ENCODE measurements at regions of chr1 and their contacts with region 1.

Region 1: GRCh38 chr1:33455539-33456501 is 16.6 kb upstream of the ZSCAN20 start:
- DNase-seq: peak; percentile 74
- H3K4me3 ChIP-seq: no peak overlapping the region
- H3K27ac ChIP-seq: no peak overlapping the region
- H3K4me1 ChIP-seq: peaks cover 36% of the 10 kb centered on the region
- H3K27me3 ChIP-seq: no peaks in the 10 kb centered on the region
- CTCF ChIP-seq: peak; percentile 91 to 92

Region 2: GRCh38 chr1:33111970-33112369 is 343.9 kb before region 1 on chr1:
- CTCF ChIA-PET with region 1: no interaction called
- dilution Hi-C with region 1: no loop called
- in situ Hi-C with region 1: loop called in 1 of 2 experiments (anchors 10 kb)
- intact Hi-C with region 1: loop called (anchors 5 kb)
- DNase-seq: peak; percentile 26
- H3K4me3 ChIP-seq: no peak overlapping the region
- H3K27ac ChIP-seq: no peak overlapping the region
- H3K4me1 ChIP-seq: no peaks in the 10 kb centered on the region
- H3K27me3 ChIP-seq: no peaks in the 10 kb centered on the region
- CTCF ChIP-seq: peak; percentile 48 to 62

Region 3: DNA sequence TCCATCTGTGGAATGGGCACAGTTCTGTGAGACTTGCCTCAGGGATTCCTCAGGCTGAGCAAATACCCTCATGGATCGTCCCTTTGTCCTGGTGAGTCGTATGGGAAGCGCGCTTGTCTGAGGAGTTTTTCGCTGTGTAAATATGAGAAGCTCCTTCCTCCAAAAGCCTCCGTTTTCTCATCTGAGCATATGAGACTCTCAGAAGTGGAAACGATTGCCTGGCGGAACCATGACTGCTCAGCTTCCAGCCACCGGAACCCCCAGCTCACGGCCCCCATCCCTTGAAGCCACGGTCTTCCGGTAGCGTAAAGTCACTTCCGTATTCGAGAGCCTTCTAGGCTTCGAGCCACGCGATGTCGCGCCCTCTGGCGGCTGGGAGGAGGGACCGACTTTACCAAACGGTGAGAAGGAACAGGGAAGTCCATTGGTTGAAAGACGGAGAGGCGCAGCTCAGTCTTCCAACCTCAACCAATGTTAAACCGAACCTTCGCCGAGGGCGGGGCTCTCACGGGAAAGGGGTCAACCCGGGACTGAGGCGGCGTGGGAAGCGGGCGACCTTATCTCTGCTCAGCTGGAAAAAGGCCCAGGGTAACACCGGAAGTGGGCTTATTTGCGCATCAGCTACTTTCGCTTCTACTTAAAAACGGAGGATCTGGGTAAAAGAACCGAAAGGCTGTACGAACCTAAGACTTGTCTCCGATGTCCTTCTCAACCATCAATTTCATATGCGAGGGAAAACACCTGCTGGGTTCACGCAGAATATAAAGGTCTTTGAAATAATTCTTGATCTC is 328.6 kb before region 1 on chr1:
- CTCF ChIA-PET with region 1: interaction called, 16 read pairs
- dilution Hi-C with region 1: no loop called
- in situ Hi-C with region 1: no loop called
- intact Hi-C with region 1: no loop called
- DNase-seq: peak; percentile 99
- H3K4me3 ChIP-seq: peak overlapping the region; percentile 90 to 100 (median 96)
- H3K27ac ChIP-seq: peak overlapping the region; percentile 79
- H3K4me1 ChIP-seq: peaks cover 20% of the 10 kb centered on the region
- H3K27me3 ChIP-seq: no peaks in the 10 kb centered on the region
- CTCF ChIP-seq: peak; percentile 95 to 99

Region 4: GRCh38 chr1:33295450-33296081 is 160.3 kb before region 1 on chr1:
- CTCF ChIA-PET with region 1: interaction called, 5 read pairs
- dilution Hi-C with region 1: no loop called
- in situ Hi-C with region 1: no loop called
- intact Hi-C with region 1: loop called (anchors 1 kb)
- DNase-seq: peak; percentile 76
- H3K4me3 ChIP-seq: no peak overlapping the region
- H3K27ac ChIP-seq: no peak overlapping the region
- H3K4me1 ChIP-seq: no peaks in the 10 kb centered on the region
- H3K27me3 ChIP-seq: no peaks in the 10 kb centered on the region
- CTCF ChIP-seq: peak; percentile 94 to 97

Region 5: GRCh38 chr1:33367485-33368405 is 88.1 kb before region 1 on chr1:
- CTCF ChIA-PET with region 1: interaction called, 3 read pairs
- dilution Hi-C with region 1: no loop called
- in situ Hi-C with region 1: loop called (anchors 10 to 25 kb)
- intact Hi-C with region 1: loop called (anchors 1 kb)
- DNase-seq: peak; percentile 62
- H3K4me3 ChIP-seq: no peak overlapping the region
- H3K27ac ChIP-seq: no peak overlapping the region
- H3K4me1 ChIP-seq: peaks cover 34% of the 10 kb centered on the region
- H3K27me3 ChIP-seq: no peaks in the 10 kb centered on the region
- CTCF ChIP-seq: peak; percentile 94 to 99

Region 6: DNA sequence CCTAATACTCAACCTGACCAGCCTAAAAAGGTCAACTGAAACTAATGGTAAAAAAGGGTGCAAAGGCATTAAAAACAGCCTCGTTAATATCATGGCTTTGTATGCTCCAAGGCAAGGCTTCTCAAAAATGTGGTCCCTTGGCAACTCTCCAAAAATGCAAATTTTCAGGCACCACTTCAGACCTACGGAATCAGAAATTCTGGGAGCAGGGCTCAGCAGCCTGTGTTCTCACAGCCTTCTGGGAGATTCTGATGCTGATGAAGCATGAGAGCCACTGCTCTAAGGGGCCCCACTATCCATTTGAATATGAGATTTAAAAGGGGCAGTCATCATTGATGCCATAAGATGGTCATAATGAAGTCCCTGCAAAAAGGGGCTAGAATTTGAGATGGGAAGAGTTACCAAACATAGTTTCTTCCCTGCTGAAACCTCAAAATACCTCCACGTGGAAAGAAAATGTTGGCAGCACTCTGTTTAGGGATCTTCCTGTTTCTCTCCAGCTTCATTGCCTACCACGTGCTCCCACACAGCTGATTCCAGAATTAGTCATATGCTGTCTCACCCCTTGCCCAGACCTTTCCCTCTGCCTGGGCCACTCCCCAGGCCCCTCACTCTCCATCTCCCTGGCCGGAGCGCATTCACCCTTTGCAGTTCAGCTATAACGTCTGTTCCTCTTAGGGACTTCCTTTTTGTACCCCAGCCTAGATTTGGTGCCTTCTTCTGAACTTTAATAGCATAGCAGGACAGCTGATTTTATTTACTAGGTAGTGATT is 71.6 kb before region 1 on chr1:
- CTCF ChIA-PET with region 1: no interaction called
- dilution Hi-C with region 1: no loop called
- in situ Hi-C with region 1: loop called in 1 of 2 experiments (anchors 10 kb)
- intact Hi-C with region 1: loop called (anchors 5 kb)
- DNase-seq: peak; percentile 59
- H3K4me3 ChIP-seq: no peak overlapping the region
- H3K27ac ChIP-seq: no peak overlapping the region
- H3K4me1 ChIP-seq: peaks cover 27% of the 10 kb centered on the region
- H3K27me3 ChIP-seq: no peaks in the 10 kb centered on the region
- CTCF ChIP-seq: no peak

Region 7: DNA sequence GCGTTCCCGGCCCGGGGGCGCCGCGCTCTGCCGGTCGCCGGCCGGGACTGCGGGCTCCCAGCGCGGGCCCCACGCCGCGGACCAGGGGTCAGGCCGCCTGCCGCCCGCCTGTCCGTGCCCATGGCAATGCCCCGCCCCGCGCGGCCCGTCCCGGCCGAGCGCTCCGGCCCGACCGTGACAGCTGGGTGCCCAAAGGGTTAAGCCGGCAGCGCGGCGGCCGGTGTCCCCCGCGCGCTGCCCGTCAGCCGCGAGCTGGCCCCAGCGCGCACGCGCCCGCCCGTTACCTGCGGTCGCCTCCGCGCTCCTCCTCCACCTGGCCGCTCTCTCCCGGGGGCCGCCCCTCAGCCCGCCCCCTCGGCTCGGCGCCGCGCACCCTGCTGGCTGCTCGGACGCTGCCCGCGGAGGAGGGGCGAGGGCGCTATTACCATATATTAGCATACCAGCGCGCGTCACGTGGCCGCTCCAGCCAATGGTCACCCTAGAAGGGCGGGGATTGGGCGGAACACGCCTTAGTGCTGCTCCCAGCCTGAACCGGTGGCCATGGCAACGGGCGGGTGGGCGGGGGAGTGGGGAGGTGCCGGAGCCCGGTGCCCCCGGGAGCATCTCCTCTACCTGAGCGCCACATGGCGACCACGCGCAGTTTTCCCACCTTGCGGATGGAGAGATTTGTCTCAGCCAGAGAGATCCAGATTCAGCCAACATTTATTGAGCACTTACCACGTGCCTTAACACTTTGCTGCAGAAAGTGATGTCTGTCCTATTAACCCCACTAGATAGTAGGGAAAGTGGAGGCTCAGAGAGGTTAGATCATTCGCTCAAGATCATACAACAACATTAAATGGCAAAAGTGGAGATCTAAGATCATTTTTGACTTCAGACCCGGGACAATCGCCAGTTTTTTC is 24.9 kb before region 1 on chr1 and contains the start of gene PHC2:
- CTCF ChIA-PET with region 1: interaction called, 8 read pairs
- dilution Hi-C with region 1: no loop called
- in situ Hi-C with region 1: no loop called
- intact Hi-C with region 1: loop called (anchors 2 kb)
- DNase-seq: peak; percentile 97
- H3K4me3 ChIP-seq: peak within 1 kb of the TSS; percentile 70 to 82 (median 76)
- H3K27ac ChIP-seq: peak within 1 kb of the TSS; percentile 54
- H3K4me1 ChIP-seq: peaks cover 55% of the 10 kb centered on the region
- H3K27me3 ChIP-seq: no peaks in the 10 kb centered on the region
- CTCF ChIP-seq: peak in 1 of 2 donors; percentile 28
- total RNA-seq, gene PHC2: 136 to 140 TPM